ENCODE measurements at regions of chr9 and their contacts with region 1.

Region 1: DNA sequence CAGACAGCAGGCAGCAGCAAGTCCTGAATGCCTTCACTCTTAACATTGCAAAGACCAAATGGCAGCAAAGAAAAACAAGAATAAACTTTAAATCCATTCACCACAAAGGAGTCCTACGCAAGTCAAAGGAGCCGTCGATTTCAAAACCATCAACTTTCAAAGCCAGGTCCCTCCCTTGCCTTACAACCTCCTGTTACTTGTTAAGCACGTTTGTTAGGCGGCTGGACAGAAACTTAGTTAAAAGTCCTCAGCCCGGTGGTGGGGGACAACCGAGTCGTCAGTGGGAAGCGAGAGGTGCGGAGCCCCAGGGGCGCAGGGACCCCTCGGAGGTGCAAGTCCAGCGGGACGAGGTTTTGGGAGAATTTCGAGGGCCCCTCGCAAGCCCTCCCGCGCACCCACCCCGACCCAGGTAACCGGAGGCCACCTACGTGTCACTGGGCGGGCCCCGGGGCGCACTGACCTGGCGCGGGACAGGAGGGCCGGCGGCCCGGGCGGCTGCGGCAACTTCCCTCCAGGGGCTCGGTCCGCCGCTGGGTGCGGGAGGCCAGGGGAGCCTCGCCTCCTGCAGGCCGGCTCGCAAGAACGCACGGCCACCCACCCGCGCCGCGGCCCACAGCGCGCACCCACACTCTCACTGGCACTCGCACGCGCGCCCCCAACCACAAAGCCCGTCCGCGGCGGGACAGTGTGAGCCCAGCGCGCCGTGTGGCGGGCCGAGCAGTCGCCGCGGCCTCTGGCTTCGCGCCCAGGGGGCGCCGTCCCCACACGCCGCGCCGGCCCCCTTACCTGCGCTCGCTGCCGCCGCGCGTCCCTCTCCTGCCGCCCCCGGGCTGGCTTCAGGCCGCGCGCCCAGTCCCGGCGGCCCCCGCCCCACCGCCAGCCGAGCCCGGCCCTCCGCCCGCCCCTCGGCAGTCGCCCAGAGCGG is 627 bp downstream of the LPAR1 start:
- DNase-seq: peak; percentile 26
- H3K4me3 Mint-ChIP-seq: peak overlapping the region; percentile 68
- H3K27ac Mint-ChIP-seq: peak overlapping the region; percentile 65
- H3K4me1 Mint-ChIP-seq: peaks cover 18% of the 10 kb centered on the region
- H3K27me3 Mint-ChIP-seq: no peaks in the 10 kb centered on the region
- CTCF ChIP-seq: no peak

Region 2: GRCh38 chr9:111023128-111023527 is 14.5 kb before region 1 on chr9:
- CTCF ChIA-PET with region 1: no interaction called
- POLR2A ChIA-PET with region 1: no interaction called
- intact Hi-C with region 1: no loop called
- DNase-seq: no peak
- H3K4me3 Mint-ChIP-seq: no peak overlapping the region
- H3K27ac Mint-ChIP-seq: no peak overlapping the region
- H3K4me1 Mint-ChIP-seq: no peaks in the 10 kb centered on the region
- H3K27me3 Mint-ChIP-seq: no peaks in the 10 kb centered on the region
- CTCF ChIP-seq: no peak

Region 3: GRCh38 chr9:111298731-111299598 is 261.3 kb after region 1 on chr9:
- CTCF ChIA-PET with region 1: no interaction called
- POLR2A ChIA-PET with region 1: no interaction called
- intact Hi-C with region 1: loop called (anchors 5 kb)
- DNase-seq: peak; percentile 67
- H3K4me3 Mint-ChIP-seq: no peak overlapping the region
- H3K27ac Mint-ChIP-seq: no peak overlapping the region
- H3K4me1 Mint-ChIP-seq: peaks cover 6% of the 10 kb centered on the region
- H3K27me3 Mint-ChIP-seq: no peaks in the 10 kb centered on the region
- CTCF ChIP-seq: peak; percentile 70

Region 4: DNA sequence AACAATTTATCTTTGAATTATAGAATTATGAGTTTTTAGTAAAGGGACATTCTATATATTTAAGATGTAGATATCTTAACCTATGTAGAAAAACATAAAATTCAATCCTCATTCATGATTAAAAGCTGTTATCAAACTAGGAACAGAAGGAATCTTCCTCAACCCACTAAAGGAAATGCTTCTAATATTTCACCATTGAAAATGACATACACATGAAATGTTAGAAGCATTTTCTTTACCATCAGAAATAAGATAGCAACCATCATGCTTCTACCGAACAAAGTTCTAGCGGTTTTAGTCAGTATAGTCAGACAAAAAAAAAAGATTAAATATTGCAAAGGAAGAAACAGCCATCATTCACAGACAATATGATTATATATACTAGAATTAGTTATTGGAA is 724.9 kb after region 1 on chr9:
- CTCF ChIA-PET with region 1: no interaction called
- POLR2A ChIA-PET with region 1: no interaction called
- intact Hi-C with region 1: no loop called
- DNase-seq: no peak
- H3K4me3 Mint-ChIP-seq: no peak overlapping the region
- H3K27ac Mint-ChIP-seq: no peak overlapping the region
- H3K4me1 Mint-ChIP-seq: peaks cover 8% of the 10 kb centered on the region
- H3K27me3 Mint-ChIP-seq: no peaks in the 10 kb centered on the region
- CTCF ChIP-seq: no peak